ENCODE measurements at regions of chr6 and their contacts with region 1.

Region 1: GRCh38 chr6:25223490-25223991 is 55.6 kb upstream of the CARMIL1 start:
- DNase-seq: peak; percentile 75 to 83
- ATAC-seq: peak; percentile 78
- H3K4me3 ChIP-seq: peak overlapping the region; percentile 32 to 59
- H3K27ac ChIP-seq: no peak overlapping the region
- H3K4me1 ChIP-seq: no peaks in the 10 kb centered on the region
- H3K27me3 ChIP-seq: no peaks in the 10 kb centered on the region

Region 2: DNA sequence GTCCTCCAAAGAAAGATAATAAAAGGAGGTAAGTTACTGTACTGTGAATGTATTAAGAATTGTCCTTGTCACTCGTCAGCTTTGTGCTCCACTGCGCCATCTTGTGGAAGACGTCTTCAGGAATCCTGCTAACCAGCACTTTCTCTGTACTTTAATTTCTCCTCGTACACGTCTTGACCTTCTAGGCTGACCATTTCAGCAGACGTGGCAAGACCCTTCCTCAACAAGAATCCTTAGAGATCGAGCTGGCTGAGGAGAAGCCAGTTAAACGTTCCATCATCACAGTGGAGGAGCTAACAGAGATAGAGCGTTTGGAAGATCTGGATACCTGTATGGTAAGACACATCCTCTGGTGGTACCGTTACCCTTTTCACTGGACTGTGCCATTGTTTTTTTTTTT is 333.0 kb after region 1 on chr6:
- intact Hi-C with region 1: loop called (anchors 2 to 10 kb)
- DNase-seq: peak; percentile 83 to 91
- ATAC-seq: peak; percentile 74
- H3K4me3 ChIP-seq: no peak overlapping the region
- H3K27ac ChIP-seq: no peak overlapping the region
- H3K4me1 ChIP-seq: no peaks in the 10 kb centered on the region
- H3K27me3 ChIP-seq: no peaks in the 10 kb centered on the region

Region 3: DNA sequence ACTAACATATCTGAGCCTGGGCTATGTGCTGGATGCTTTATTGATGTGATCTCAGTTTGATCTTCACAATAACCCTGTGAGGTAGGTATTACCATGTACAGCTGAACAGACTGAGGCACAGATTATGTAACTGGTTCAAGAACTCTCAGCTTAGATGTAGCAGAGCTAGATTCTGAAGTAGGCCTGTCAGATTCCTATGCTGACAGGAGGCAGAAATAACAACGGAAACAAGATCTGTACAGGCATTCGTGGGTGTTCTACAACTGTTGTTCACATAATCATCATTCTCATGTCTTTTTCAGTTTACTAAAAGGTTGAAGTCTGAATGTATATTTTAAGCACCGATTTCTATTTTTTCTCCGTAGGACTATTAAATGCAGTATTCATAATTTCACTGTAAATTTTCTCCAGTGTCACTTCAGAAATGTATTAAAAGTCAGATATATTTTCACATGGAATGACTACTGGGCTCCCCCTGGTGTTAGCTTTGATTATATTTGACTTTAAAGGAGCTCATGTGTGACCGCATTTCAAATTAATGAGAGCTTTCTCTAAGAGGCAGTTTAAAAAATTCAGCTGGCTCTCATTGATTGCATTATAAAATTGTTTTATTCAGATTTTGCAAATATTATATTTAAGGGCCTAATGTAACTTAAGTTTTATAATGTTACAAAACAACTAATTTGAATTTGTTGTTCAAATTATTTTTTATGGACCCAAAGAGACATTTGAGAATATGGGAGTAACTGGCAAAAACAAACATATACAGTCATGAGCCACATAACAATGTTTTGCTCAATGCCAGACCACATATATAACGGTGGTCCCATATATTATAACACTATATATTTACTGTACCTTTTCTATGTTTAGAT is 494.6 kb after region 1 on chr6:
- intact Hi-C with region 1: loop called (anchors 5 to 10 kb)
- DNase-seq: no peak
- ATAC-seq: no peak
- H3K4me3 ChIP-seq: no peak overlapping the region
- H3K27ac ChIP-seq: no peak overlapping the region
- H3K4me1 ChIP-seq: no peaks in the 10 kb centered on the region
- H3K27me3 ChIP-seq: no peaks in the 10 kb centered on the region

Measured in aorta (tissue), 5 donors.